ENCODE measurements at regions of chr3 and their contacts with region 1.

Region 1: GRCh38 chr3:177197041-177197727 is at the start of gene TBL1XR1:
- DNase-seq: peak; percentile 91
- ATAC-seq: peak; percentile 34
- H3K4me3 Mint-ChIP-seq: peak within 1 kb of the TSS; percentile 88
- H3K27ac Mint-ChIP-seq: peak within 1 kb of the TSS; percentile 99
- H3K4me1 Mint-ChIP-seq: peaks cover 65% of the 10 kb centered on the region
- H3K27me3 Mint-ChIP-seq: no peaks in the 10 kb centered on the region
- total RNA-seq, gene TBL1XR1: 164 to 226 TPM

Region 2: GRCh38 chr3:177057768-177058167 is 139.4 kb before region 1 on chr3:
- CTCF ChIA-PET with region 1: no interaction called
- POLR2A ChIA-PET with region 1: interaction called, 3 read pairs
- intact Hi-C with region 1: loop called (anchors 1 to 2 kb)
- DNase-seq: peak; percentile 82
- ATAC-seq: peak; percentile 97
- H3K4me3 Mint-ChIP-seq: no peak overlapping the region
- H3K27ac Mint-ChIP-seq: no peak overlapping the region
- H3K4me1 Mint-ChIP-seq: peaks cover 37% of the 10 kb centered on the region
- H3K27me3 Mint-ChIP-seq: no peaks in the 10 kb centered on the region

Region 3: GRCh38 chr3:177144923-177145780 is 52.0 kb before region 1 on chr3:
- CTCF ChIA-PET with region 1: interaction called, 5 read pairs
- POLR2A ChIA-PET with region 1: interaction called, 8 read pairs
- intact Hi-C with region 1: loop called (anchors 2 kb)
- DNase-seq: no peak
- ATAC-seq: peak; percentile 26
- H3K4me3 Mint-ChIP-seq: peak overlapping the region; percentile 30
- H3K27ac Mint-ChIP-seq: peak overlapping the region; percentile 59
- H3K4me1 Mint-ChIP-seq: peaks cover 77% of the 10 kb centered on the region
- H3K27me3 Mint-ChIP-seq: no peaks in the 10 kb centered on the region

Region 4: GRCh38 chr3:177185035-177185574 is 12.1 kb before region 1 on chr3:
- CTCF ChIA-PET with region 1: interaction called, 16 read pairs
- POLR2A ChIA-PET with region 1: interaction called, 5 read pairs
- intact Hi-C with region 1: no loop called
- DNase-seq: no peak
- ATAC-seq: peak; percentile 60
- H3K4me3 Mint-ChIP-seq: no peak overlapping the region
- H3K27ac Mint-ChIP-seq: peak overlapping the region; percentile 27
- H3K4me1 Mint-ChIP-seq: peaks cover 61% of the 10 kb centered on the region
- H3K27me3 Mint-ChIP-seq: no peaks in the 10 kb centered on the region

Region 5: GRCh38 chr3:177320765-177321247 is 123.6 kb after region 1 on chr3:
- CTCF ChIA-PET with region 1: no interaction called
- POLR2A ChIA-PET with region 1: no interaction called
- intact Hi-C with region 1: loop called (anchors 1 to 5 kb)
- DNase-seq: peak; percentile 23
- ATAC-seq: peak; percentile 78
- H3K4me3 Mint-ChIP-seq: no peak overlapping the region
- H3K27ac Mint-ChIP-seq: peak overlapping the region; percentile 30
- H3K4me1 Mint-ChIP-seq: peaks cover 31% of the 10 kb centered on the region
- H3K27me3 Mint-ChIP-seq: peaks cover 3% of the 10 kb centered on the region

Region 6: GRCh38 chr3:177426878-177427495 is 229.8 kb after region 1 on chr3:
- CTCF ChIA-PET with region 1: no interaction called
- POLR2A ChIA-PET with region 1: interaction called, 5 read pairs
- intact Hi-C with region 1: loop called (anchors 1 kb)
- DNase-seq: peak; percentile 77
- ATAC-seq: peak; percentile 97
- H3K4me3 Mint-ChIP-seq: peak overlapping the region; percentile 47
- H3K27ac Mint-ChIP-seq: peak overlapping the region; percentile 92
- H3K4me1 Mint-ChIP-seq: peaks cover 32% of the 10 kb centered on the region
- H3K27me3 Mint-ChIP-seq: peaks cover 3% of the 10 kb centered on the region

Region 7: DNA sequence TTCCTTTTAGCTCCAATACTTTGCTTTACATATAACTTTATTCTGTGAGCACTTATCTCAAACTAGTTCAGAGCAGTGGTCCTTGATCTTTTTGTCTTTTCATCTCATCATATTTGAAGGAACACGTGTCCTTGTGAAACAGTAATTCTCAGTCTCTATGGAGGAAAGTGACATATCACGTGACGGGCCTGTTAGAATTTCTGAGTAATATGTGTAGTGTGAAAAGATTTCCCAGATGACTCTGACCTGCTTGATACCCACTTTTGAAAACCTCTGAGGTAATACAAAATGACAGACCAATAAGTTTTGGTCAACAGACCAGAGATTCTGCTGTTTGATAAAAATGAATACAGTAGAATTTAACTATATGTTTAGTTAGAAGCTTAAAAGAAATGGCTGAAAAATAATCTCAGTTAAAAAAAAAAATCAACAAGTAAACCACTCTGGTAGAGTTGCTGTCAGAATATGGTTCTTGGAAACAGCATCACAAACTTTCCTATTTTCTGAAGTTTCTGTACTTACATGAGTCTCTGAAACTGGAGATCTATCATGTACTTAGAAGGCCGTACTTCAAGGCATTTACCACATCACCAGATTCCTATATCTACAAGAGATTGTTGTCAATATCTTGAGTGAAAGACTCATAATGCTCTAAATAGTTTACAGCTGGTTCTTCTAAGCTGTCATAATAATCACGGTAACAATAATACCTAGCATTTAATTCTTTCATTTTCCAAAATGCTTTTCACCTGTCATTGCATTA is 590.3 kb after region 1 on chr3:
- CTCF ChIA-PET with region 1: no interaction called
- POLR2A ChIA-PET with region 1: no interaction called
- intact Hi-C with region 1: loop called in 1 of 2 experiments (anchors 1 kb)
- DNase-seq: peak; percentile 32
- ATAC-seq: peak; percentile 89
- H3K4me3 Mint-ChIP-seq: no peak overlapping the region
- H3K27ac Mint-ChIP-seq: peak overlapping the region; percentile 52
- H3K4me1 Mint-ChIP-seq: peaks cover 26% of the 10 kb centered on the region
- H3K27me3 Mint-ChIP-seq: no peaks in the 10 kb centered on the region